Naive thymus-derived CD4-positive, alpha-beta T cell (primary cell): ENCODE measurements at regions of chr19 and their contacts with region 1.

Region 1: GRCh38 chr19:35013031-35013819 is 13.1 kb downstream of the GRAMD1A start:
- DNase-seq: peak; percentile 73 to 87 (median 79)
- ATAC-seq: peak; percentile 83
- H3K4me3 ChIP-seq: peak overlapping the region; percentile 48
- H3K4me3 Mint-ChIP-seq: peak overlapping the region; percentile 76 to 94 (median 86)
- H3K27ac ChIP-seq: peak overlapping the region; percentile 75
- H3K27ac Mint-ChIP-seq: peak overlapping the region; percentile 76 to 99 (median 96)
- H3K4me1 ChIP-seq: peaks cover 57 to 59% of the 10 kb centered on the region in 2 donors
- H3K4me1 Mint-ChIP-seq: peaks cover 41 to 83% (median 67%) of the 10 kb centered on the region in 7 donors
- H3K27me3 ChIP-seq: no peaks in the 10 kb centered on the region
- H3K27me3 Mint-ChIP-seq: no peaks in the 10 kb centered on the region

Region 2: GRCh38 chr19:33639035-33639681 is 1374.1 kb before region 1 on chr19:
- CTCF ChIA-PET with region 1: no interaction called
- POLR2A ChIA-PET with region 1: no interaction called
- intact Hi-C with region 1: no loop called
- DNase-seq: no peak
- ATAC-seq: no peak
- H3K4me3 ChIP-seq: no peak overlapping the region
- H3K4me3 Mint-ChIP-seq: no peak overlapping the region
- H3K27ac ChIP-seq: no peak overlapping the region
- H3K27ac Mint-ChIP-seq: no peak overlapping the region
- H3K4me1 ChIP-seq: no peaks in the 10 kb centered on the region
- H3K4me1 Mint-ChIP-seq: no peaks in the 10 kb centered on the region
- H3K27me3 ChIP-seq: no peaks in the 10 kb centered on the region
- H3K27me3 Mint-ChIP-seq: peaks cover 0 to 34% (median 29%) of the 10 kb centered on the region in 5 donors

Region 3: DNA sequence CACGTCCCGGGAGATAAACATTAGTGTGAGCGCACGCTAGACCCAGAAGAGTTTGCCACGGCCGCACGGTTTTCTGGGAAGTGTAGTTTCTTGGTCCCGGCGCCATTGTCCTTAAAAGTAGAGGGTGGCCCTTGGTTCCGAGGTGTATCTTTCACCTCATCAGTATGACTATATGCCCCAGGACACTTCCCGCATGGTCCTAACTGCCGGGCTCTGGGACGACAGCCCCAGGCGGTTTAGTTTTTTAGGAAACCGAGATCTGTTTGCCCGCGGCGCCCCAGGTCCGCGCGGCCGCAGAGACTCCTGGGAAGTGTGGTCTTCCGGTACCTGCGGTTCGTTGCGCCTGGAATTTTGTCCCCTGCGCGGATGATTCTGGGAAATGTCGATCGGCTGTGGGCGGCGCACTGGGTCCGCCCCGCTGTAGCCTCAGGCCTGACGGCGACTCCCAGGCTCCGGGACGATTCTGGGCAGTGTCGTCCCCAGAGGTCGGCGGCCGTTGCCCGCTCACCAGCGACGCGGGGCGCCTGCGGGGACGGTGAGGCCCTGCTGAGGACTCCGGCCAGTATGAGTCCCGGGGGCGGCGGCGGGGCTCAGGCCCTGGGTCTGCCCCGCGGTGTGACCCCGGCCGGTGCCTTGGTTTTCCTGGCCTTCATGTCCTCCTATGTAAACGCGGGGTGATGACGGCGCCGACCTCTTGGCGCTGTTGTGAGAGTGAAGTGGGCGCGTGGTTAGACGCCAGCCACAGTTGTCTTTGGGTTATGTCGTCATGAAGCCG is 279.2 kb before region 1 on chr19 and contains the start of gene ZNF181:
- CTCF ChIA-PET with region 1: no interaction called
- POLR2A ChIA-PET with region 1: no interaction called
- intact Hi-C with region 1: loop called (anchors 5 to 10 kb)
- DNase-seq: peak; percentile 58 to 84 (median 82)
- ATAC-seq: peak; percentile 89
- H3K4me3 ChIP-seq: peak within 1 kb of the TSS; percentile 79
- H3K4me3 Mint-ChIP-seq: peak within 1 kb of the TSS; percentile 86 to 99 (median 98)
- H3K27ac ChIP-seq: peak within 1 kb of the TSS; percentile 94
- H3K27ac Mint-ChIP-seq: peak within 1 kb of the TSS; percentile 90 to 99 (median 98)
- H3K4me1 ChIP-seq: peaks cover 11 to 17% of the 10 kb centered on the region in 2 donors
- H3K4me1 Mint-ChIP-seq: peaks cover 18 to 39% (median 28%) of the 10 kb centered on the region in 7 donors
- H3K27me3 ChIP-seq: no peaks in the 10 kb centered on the region
- H3K27me3 Mint-ChIP-seq: peaks cover 0 to 4% (median 0%) of the 10 kb centered on the region in 5 donors
- total RNA-seq, gene ZNF181: 4.8 to 28.5 (median 8.4) TPM

Region 4: DNA sequence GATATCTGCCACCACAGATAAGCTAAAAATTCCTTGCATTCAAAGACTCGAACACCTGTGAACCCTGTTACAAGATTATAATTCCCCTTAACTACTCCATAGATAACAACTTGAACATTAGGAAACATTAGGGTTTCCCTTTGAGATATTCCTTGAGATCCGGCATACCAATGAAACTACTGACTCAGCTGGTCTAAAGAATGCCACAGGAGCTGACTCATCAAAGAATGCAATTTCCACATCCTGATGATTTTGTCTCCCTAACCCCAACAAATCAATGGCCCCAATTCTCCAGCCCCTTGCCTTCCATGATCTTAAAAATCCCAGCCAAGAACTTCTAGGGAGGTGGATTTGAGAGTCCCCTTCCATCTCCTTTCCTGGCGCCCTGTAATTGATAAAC is 204.7 kb before region 1 on chr19:
- CTCF ChIA-PET with region 1: no interaction called
- POLR2A ChIA-PET with region 1: no interaction called
- intact Hi-C with region 1: no loop called
- DNase-seq: no peak
- ATAC-seq: no peak
- H3K4me3 ChIP-seq: no peak overlapping the region
- H3K4me3 Mint-ChIP-seq: peak overlapping the region in 1 of 10 donors; percentile 51
- H3K27ac ChIP-seq: no peak overlapping the region
- H3K27ac Mint-ChIP-seq: no peak overlapping the region
- H3K4me1 ChIP-seq: no peaks in the 10 kb centered on the region
- H3K4me1 Mint-ChIP-seq: peaks cover 0 to 5% (median 0%) of the 10 kb centered on the region in 7 donors
- H3K27me3 ChIP-seq: no peaks in the 10 kb centered on the region
- H3K27me3 Mint-ChIP-seq: no peaks in the 10 kb centered on the region

Region 5: GRCh38 chr19:34851353-34851752 is 161.9 kb before region 1 on chr19:
- CTCF ChIA-PET with region 1: no interaction called
- POLR2A ChIA-PET with region 1: no interaction called
- intact Hi-C with region 1: loop called in 1 of 2 experiments (anchors 2 kb)
- DNase-seq: peak in 1 of 9 donors; percentile 13
- ATAC-seq: no peak
- H3K4me3 ChIP-seq: no peak overlapping the region
- H3K4me3 Mint-ChIP-seq: no peak overlapping the region
- H3K27ac ChIP-seq: no peak overlapping the region
- H3K27ac Mint-ChIP-seq: peak overlapping the region in 4 of 9 donors; percentile 50 to 75 (median 62)
- H3K4me1 ChIP-seq: no peaks in the 10 kb centered on the region
- H3K4me1 Mint-ChIP-seq: peaks cover under 1 to 64% (median 43%) of the 10 kb centered on the region in 7 donors
- H3K27me3 ChIP-seq: no peaks in the 10 kb centered on the region
- H3K27me3 Mint-ChIP-seq: no peaks in the 10 kb centered on the region

Region 6: DNA sequence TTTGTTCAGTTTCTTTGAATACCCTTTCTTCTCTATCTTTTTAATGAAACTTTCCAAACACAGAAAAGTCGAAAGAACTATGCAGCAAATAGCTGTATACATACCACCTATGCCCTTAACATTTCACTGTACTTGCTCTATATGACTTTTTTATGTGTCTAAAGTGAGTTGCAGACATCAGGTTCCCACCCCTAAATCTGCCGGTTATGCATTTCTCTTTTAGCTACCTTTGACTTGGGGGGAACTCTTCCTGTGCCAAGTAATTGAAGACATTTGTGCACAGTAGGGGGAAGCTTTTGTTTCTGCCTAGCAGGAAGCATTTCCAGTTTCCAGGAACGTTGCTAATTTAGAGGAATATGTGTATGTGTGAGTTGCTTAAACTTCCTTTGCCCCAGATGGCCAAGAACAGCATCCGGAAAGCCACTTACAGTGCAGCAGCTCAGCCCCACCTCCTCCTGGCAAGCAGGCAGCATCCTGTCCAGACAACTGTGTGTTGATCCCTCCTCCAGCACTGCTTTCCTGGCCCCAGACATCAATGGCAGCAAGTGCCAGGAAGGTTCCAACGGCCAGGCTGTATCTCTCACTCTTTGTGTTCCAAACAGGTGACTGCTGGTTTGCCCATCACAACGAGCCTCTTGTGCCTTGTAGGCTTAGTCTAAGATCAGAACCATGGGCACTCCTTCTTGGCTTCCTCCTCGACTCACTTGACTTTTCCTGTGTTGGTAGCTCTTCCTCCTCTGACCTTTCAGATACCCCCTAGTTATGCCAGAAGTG is 27.8 kb before region 1 on chr19:
- CTCF ChIA-PET with region 1: interaction called, 8 read pairs
- POLR2A ChIA-PET with region 1: interaction called, 25 read pairs
- intact Hi-C with region 1: no loop called
- DNase-seq: peak in 3 of 9 donors; percentile 28 to 38 (median 29)
- ATAC-seq: peak; percentile 44
- H3K4me3 ChIP-seq: no peak overlapping the region
- H3K4me3 Mint-ChIP-seq: peak overlapping the region; percentile 13 to 82 (median 70)
- H3K27ac ChIP-seq: peak overlapping the region; percentile 29
- H3K27ac Mint-ChIP-seq: peak overlapping the region; percentile 45 to 92 (median 89)
- H3K4me1 ChIP-seq: peaks cover 7 to 12% of the 10 kb centered on the region in 2 donors
- H3K4me1 Mint-ChIP-seq: peaks cover 14 to 48% (median 21%) of the 10 kb centered on the region in 7 donors
- H3K27me3 ChIP-seq: no peaks in the 10 kb centered on the region
- H3K27me3 Mint-ChIP-seq: no peaks in the 10 kb centered on the region

Region 7: DNA sequence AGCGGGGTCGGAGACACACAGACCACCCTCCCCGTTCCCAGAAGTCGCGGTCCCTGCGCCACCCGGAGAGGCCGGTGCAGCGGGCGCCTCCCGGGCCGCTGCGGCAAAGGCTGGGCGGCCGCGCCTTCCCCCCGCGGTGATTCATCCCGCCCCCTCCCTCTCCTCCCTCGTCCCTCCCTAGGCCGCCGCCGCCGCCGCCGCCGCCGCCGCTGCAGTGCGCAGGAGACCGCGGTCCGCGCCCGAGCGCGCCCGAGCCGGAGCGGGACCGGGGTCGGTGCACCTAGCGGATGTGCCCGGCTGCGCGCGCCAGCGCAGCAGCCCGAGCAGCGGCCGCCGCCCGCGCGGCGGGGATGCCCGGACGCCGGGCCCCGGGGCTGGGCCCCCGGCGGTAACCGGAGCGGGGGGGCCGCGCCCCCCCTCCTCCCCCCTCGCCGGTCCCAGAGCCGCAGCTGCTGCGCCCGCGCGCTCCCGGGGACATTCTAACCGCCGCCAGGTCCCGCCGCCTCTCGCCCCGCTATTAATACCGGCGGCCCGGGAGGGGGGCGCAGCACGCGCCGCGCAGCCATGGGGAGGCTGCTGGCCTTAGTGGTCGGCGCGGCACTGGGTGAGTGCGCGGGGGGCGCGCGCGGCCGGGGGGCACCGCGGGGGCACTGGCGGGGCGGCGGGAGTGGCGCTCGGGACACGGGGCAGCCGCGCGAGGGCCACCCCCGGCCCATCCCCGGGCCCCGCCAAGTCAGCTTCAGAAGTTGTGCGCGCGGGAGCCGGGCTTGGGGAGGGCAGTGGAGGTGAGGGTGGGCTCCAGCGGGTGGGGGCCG is 17.2 kb after region 1 on chr19 and contains the start of gene SCN1B:
- CTCF ChIA-PET with region 1: interaction called, 5 read pairs
- POLR2A ChIA-PET with region 1: interaction called, 15 read pairs
- intact Hi-C with region 1: loop called in 1 of 2 experiments (anchors 1 kb)
- DNase-seq: peak in 7 of 9 donors; percentile 29 to 79 (median 36)
- ATAC-seq: peak; percentile 78
- H3K4me3 ChIP-seq: peak within 1 kb of the TSS; percentile 24
- H3K4me3 Mint-ChIP-seq: peak within 1 kb of the TSS; percentile 65 to 94 (median 80)
- H3K27ac ChIP-seq: no peak within 1 kb of the TSS
- H3K27ac Mint-ChIP-seq: peak within 1 kb of the TSS in 6 of 9 donors; percentile 29 to 82 (median 52)
- H3K4me1 ChIP-seq: peaks cover 0 to 4% of the 10 kb centered on the region in 2 donors
- H3K4me1 Mint-ChIP-seq: peaks cover 5 to 14% (median 10%) of the 10 kb centered on the region in 7 donors
- H3K27me3 ChIP-seq: peaks cover 0 to 5% of the 10 kb centered on the region in 2 donors
- H3K27me3 Mint-ChIP-seq: peaks cover 13 to 36% (median 19%) of the 10 kb centered on the region in 5 donors
- total RNA-seq, gene SCN1B: 0.48 to 1.9 (median 1.8) TPM